Esophagus squamous epithelium (tissue), 5 donors: ENCODE measurements at regions of chr5 and their contacts with region 1.

Region 1: GRCh38 chr5:134527146-134527960 is 1.9 kb downstream of the JADE2 start:
- DNase-seq: peak; percentile 55
- H3K4me3 ChIP-seq: peak overlapping the region; percentile 79 to 98 (median 90)
- H3K27ac ChIP-seq: peak overlapping the region; percentile 89 to 99 (median 96)
- H3K4me1 ChIP-seq: peaks cover 49 to 79% (median 53%) of the 10 kb centered on the region in 3 donors
- H3K27me3 ChIP-seq: no peaks in the 10 kb centered on the region
- CTCF ChIP-seq: peak; percentile 86 to 95 (median 94)
- POLR2A ChIP-seq: peak in 2 of 4 donors; percentile 21 to 51

Region 2: GRCh38 chr5:134029156-134029555 is 498.2 kb before region 1 on chr5:
- intact Hi-C with region 1: no loop called
- DNase-seq: no peak
- H3K4me3 ChIP-seq: no peak overlapping the region
- H3K27ac ChIP-seq: no peak overlapping the region
- H3K4me1 ChIP-seq: no peaks in the 10 kb centered on the region
- H3K27me3 ChIP-seq: no peaks in the 10 kb centered on the region
- CTCF ChIP-seq: no peak
- POLR2A ChIP-seq: no peak

Region 3: GRCh38 chr5:134370871-134371833 is 156.2 kb before region 1 on chr5 and contains the start of gene UBE2B:
- intact Hi-C with region 1: loop called (anchors 5 kb)
- DNase-seq: peak; percentile 98
- H3K4me3 ChIP-seq: peak within 1 kb of the TSS; percentile 75 to 93 (median 85)
- H3K27ac ChIP-seq: peak within 1 kb of the TSS; percentile 96 to 99 (median 98)
- H3K4me1 ChIP-seq: peaks cover 8 to 60% (median 22%) of the 10 kb centered on the region in 3 donors
- H3K27me3 ChIP-seq: no peaks in the 10 kb centered on the region
- CTCF ChIP-seq: peak in 1 of 6 experiments; percentile 13
- POLR2A ChIP-seq: peak in 3 of 4 donors; percentile 37 to 69 (median 68)
- total RNA-seq, gene UBE2B: 20.9 to 50.0 (median 41.7) TPM

Region 4: DNA sequence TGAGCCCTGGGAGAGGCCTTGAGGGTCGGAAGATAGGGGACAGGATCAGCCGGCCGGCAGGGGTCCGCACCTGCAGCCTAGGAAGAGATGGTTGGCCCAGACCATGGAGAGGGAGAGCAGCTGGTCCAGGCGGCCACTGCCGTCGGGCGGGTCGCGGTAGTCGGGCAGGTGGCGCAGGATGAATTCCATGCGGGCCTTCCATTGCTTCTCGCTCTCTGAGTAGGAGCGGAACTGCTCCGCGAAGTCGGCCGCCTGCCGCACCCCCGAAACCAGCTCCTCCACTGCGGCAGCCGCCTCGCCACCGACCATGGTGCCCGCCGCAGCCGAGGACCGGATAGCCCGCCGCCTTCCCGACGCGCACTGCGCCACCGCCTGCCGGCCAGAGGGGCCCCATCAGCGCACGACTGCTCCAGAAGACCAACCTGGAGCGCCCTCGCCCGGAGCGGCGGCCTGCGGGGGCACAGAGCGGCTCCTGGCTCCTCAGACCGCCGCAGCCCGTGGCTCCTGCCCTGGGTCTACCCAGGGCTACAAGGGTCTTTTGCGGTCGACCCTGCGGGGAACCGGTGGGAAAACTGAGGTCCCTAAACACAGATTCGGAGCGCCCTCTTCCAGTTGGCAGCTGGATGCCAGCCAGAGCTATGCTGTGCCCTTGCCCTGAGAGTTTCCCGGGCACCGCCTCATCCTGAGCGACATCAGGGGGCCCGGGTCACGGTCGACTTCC is 115.6 kb before region 1 on chr5 and contains the start of gene CDKN2AIPNL:
- intact Hi-C with region 1: loop called (anchors 10 kb)
- DNase-seq: peak; percentile 32
- H3K4me3 ChIP-seq: peak within 1 kb of the TSS; percentile 57 to 94 (median 84)
- H3K27ac ChIP-seq: peak within 1 kb of the TSS; percentile 80 to 90 (median 85)
- H3K4me1 ChIP-seq: peaks cover 5 to 37% (median 20%) of the 10 kb centered on the region in 3 donors
- H3K27me3 ChIP-seq: no peaks in the 10 kb centered on the region
- CTCF ChIP-seq: peak; percentile 70 to 91 (median 79)
- POLR2A ChIP-seq: peak in 2 of 4 donors; percentile 47 to 66
- total RNA-seq, gene CDKN2AIPNL: 6.9 to 28.3 (median 13.2) TPM